Heart left ventricle (tissue), 16 donors: ENCODE measurements at regions of chr6 and their contacts with region 1.

Region 1: GRCh38 chr6:150600301-150601017 is 774 bp downstream of the PLEKHG1 start:
- DNase-seq: peak; percentile 66 to 75 (median 71)
- ATAC-seq: peak; percentile 48 to 80 (median 76)
- H3K4me3 ChIP-seq: peak overlapping the region; percentile 59 to 91 (median 80)
- H3K27ac ChIP-seq: peak overlapping the region; percentile 78 to 95 (median 89)
- H3K4me1 ChIP-seq: peaks cover 0 to 22% (median 3%) of the 10 kb centered on the region in 12 donors
- H3K27me3 ChIP-seq: peaks cover 0 to 18% (median 2%) of the 10 kb centered on the region in 9 donors
- CTCF ChIP-seq: peak; percentile 20 to 66 (median 45)
- POLR2A ChIP-seq: peak in 1 of 2 donors; percentile 16

Region 2: DNA sequence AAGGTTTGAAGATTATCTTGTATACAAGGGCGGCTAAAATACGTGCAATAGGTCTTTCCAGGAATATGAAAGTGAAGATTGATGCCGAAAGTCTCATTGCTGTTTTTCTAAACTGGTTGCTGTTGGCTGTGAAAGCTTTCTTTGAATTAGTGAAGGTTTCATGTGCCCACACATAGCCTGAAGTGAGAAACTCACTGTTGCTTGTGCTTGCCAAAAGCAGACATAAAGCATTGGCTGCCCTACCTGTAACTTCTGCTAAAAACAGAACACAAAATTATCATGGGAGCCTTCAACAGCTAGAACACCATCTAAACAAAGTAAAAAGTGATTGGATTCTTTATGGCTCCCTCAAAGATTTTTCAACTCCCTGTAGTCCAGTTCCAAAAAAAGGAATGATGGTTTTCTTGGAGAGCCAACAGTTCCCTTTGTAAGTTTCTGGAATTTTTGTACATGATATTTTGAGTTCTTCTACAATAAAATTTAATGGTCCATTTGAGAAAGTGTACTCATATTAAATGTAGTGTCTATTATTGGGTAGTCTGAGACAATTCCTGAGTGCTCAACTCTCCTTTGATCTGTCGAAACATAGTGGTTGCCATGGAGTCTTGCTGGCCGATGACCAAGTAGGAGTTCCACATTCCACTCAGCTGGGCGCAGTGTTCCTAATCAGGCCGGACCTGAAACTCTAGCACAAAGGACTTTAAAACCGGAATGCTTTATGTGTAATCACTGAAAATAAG is 67.7 kb after region 1 on chr6:
- intact Hi-C with region 1: loop called in 3 of 10 experiments (anchors 5 to 10 kb)
- DNase-seq: peak; percentile 84 to 94 (median 90)
- ATAC-seq: peak; percentile 94 to 99 (median 96)
- H3K4me3 ChIP-seq: no peak overlapping the region
- H3K27ac ChIP-seq: peak overlapping the region; percentile 29 to 73 (median 59)
- H3K4me1 ChIP-seq: peaks cover 6 to 49% (median 30%) of the 10 kb centered on the region in 12 donors
- H3K27me3 ChIP-seq: no peaks in the 10 kb centered on the region
- CTCF ChIP-seq: peak in 6 of 12 donors; percentile 9 to 55 (median 24)
- POLR2A ChIP-seq: no peak

Region 3: GRCh38 chr6:150685860-150686259 is 85.4 kb after region 1 on chr6:
- intact Hi-C with region 1: loop called in 3 of 10 experiments (anchors 1 to 5 kb)
- DNase-seq: peak in 2 of 5 donors; percentile 29 to 61
- ATAC-seq: no peak
- H3K4me3 ChIP-seq: peak overlapping the region in 3 of 12 donors; percentile 3 to 55 (median 51)
- H3K27ac ChIP-seq: peak overlapping the region in 9 of 12 donors; percentile 50 to 92 (median 86)
- H3K4me1 ChIP-seq: peaks cover 0 to 61% (median 26%) of the 10 kb centered on the region in 12 donors
- H3K27me3 ChIP-seq: no peaks in the 10 kb centered on the region
- CTCF ChIP-seq: peak in 11 of 12 donors; percentile 40 to 66 (median 56)
- POLR2A ChIP-seq: no peak

Region 4: GRCh38 chr6:150800674-150801314 is 200.3 kb after region 1 on chr6:
- intact Hi-C with region 1: loop called in 2 of 10 experiments (anchors 5 to 10 kb)
- DNase-seq: no peak
- ATAC-seq: peak in 3 of 4 donors; percentile 20 to 35 (median 34)
- H3K4me3 ChIP-seq: no peak overlapping the region
- H3K27ac ChIP-seq: peak overlapping the region in 2 of 12 donors; percentile 12 to 17
- H3K4me1 ChIP-seq: peaks cover 0 to 4% (median 0%) of the 10 kb centered on the region in 12 donors
- H3K27me3 ChIP-seq: no peaks in the 10 kb centered on the region
- CTCF ChIP-seq: no peak
- POLR2A ChIP-seq: no peak

Region 5: GRCh38 chr6:150806811-150807210 is 206.4 kb after region 1 on chr6:
- intact Hi-C with region 1: loop called in 7 of 10 experiments (anchors 5 to 10 kb)
- DNase-seq: no peak
- ATAC-seq: no peak
- H3K4me3 ChIP-seq: no peak overlapping the region
- H3K27ac ChIP-seq: no peak overlapping the region
- H3K4me1 ChIP-seq: no peaks in the 10 kb centered on the region
- H3K27me3 ChIP-seq: no peaks in the 10 kb centered on the region
- CTCF ChIP-seq: no peak
- POLR2A ChIP-seq: no peak